Right lobe of liver (tissue), 6 donors: ENCODE measurements at regions of chr17 and their contacts with region 1.

Region 1: GRCh38 chr17:31570951-31571892 is 179.7 kb downstream of the RAB11FIP4 start:
- DNase-seq: peak; percentile 65 to 88 (median 85)
- ATAC-seq: peak; percentile 20 to 46 (median 32)
- H3K4me3 ChIP-seq: no peak overlapping the region
- H3K27ac ChIP-seq: peak overlapping the region; percentile 38 to 93 (median 86)
- H3K4me1 ChIP-seq: peaks cover 0 to 50% (median 23%) of the 10 kb centered on the region in 4 donors
- H3K27me3 ChIP-seq: no peaks in the 10 kb centered on the region
- CTCF ChIP-seq: no peak
- POLR2A ChIP-seq: no peak

Region 2: GRCh38 chr17:31508288-31509094 is 62.7 kb before region 1 on chr17:
- intact Hi-C with region 1: no loop called
- DNase-seq: peak in 1 of 3 donors; percentile 54
- ATAC-seq: peak; percentile 47 to 70 (median 54)
- H3K4me3 ChIP-seq: no peak overlapping the region
- H3K27ac ChIP-seq: peak overlapping the region in 2 of 3 donors; percentile 15 to 20
- H3K4me1 ChIP-seq: peaks cover 0 to 18% (median 9%) of the 10 kb centered on the region in 4 donors
- H3K27me3 ChIP-seq: no peaks in the 10 kb centered on the region
- CTCF ChIP-seq: peak in 1 of 4 donors; percentile 17
- POLR2A ChIP-seq: no peak

Region 3: GRCh38 chr17:31627960-31628359 is 56.7 kb after region 1 on chr17:
- intact Hi-C with region 1: no loop called
- DNase-seq: no peak
- ATAC-seq: no peak
- H3K4me3 ChIP-seq: no peak overlapping the region
- H3K27ac ChIP-seq: no peak overlapping the region
- H3K4me1 ChIP-seq: peaks cover 0 to 5% (median 0%) of the 10 kb centered on the region in 4 donors
- H3K27me3 ChIP-seq: no peaks in the 10 kb centered on the region
- CTCF ChIP-seq: no peak
- POLR2A ChIP-seq: no peak

Region 4: DNA sequence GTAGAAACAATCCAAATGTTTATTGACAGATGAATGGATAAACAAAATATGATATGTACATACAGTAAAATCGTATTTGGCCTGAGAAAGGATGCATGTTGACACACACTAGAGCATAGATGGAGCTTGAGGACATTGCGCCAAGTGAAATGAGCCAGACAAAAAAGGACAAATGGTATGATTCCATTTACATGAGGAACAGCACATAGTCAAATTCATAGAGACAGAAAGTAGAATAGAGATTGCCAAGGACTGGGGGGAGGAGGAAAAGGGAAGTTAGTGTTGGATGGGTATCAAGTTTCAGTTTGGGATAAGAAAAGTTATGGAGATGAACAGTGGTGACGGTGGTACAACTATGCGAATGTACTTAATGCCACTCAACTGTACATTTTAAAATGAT is 239.9 kb after region 1 on chr17:
- intact Hi-C with region 1: loop called in 1 of 2 experiments (anchors 10 kb)
- DNase-seq: no peak
- ATAC-seq: peak in 2 of 4 donors; percentile 41 to 42
- H3K4me3 ChIP-seq: no peak overlapping the region
- H3K27ac ChIP-seq: no peak overlapping the region
- H3K4me1 ChIP-seq: peaks cover 0 to 22% (median 7%) of the 10 kb centered on the region in 4 donors
- H3K27me3 ChIP-seq: no peaks in the 10 kb centered on the region
- CTCF ChIP-seq: no peak
- POLR2A ChIP-seq: no peak